ENCODE measurements at regions of chr15 and their contacts with region 1.

Region 1: GRCh38 chr15:94324117-94324826 is 92.9 kb downstream of the MCTP2 start:
- DNase-seq: peak; percentile 61
- H3K4me3 Mint-ChIP-seq: no peak overlapping the region
- H3K27ac Mint-ChIP-seq: no peak overlapping the region
- H3K4me1 Mint-ChIP-seq: no peaks in the 10 kb centered on the region
- H3K27me3 Mint-ChIP-seq: no peaks in the 10 kb centered on the region
- CTCF ChIP-seq: peak; percentile 90

Region 2: GRCh38 chr15:94186770-94187331 is 137.4 kb before region 1 on chr15:
- CTCF ChIA-PET with region 1: interaction called, 17 read pairs
- POLR2A ChIA-PET with region 1: no interaction called
- intact Hi-C with region 1: no loop called
- DNase-seq: no peak
- H3K4me3 Mint-ChIP-seq: no peak overlapping the region
- H3K27ac Mint-ChIP-seq: no peak overlapping the region
- H3K4me1 Mint-ChIP-seq: peaks cover under 1% of the 10 kb centered on the region
- H3K27me3 Mint-ChIP-seq: no peaks in the 10 kb centered on the region
- CTCF ChIP-seq: no peak

Region 3: GRCh38 chr15:94238539-94239118 is 85.6 kb before region 1 on chr15:
- CTCF ChIA-PET with region 1: interaction called, 54 read pairs
- POLR2A ChIA-PET with region 1: interaction called, 56 read pairs
- intact Hi-C with region 1: loop called (anchors 2 kb)
- DNase-seq: no peak
- H3K4me3 Mint-ChIP-seq: peak overlapping the region; percentile 43
- H3K27ac Mint-ChIP-seq: peak overlapping the region; percentile 86
- H3K4me1 Mint-ChIP-seq: peaks cover 46% of the 10 kb centered on the region
- H3K27me3 Mint-ChIP-seq: no peaks in the 10 kb centered on the region
- CTCF ChIP-seq: no peak

Region 4: DNA sequence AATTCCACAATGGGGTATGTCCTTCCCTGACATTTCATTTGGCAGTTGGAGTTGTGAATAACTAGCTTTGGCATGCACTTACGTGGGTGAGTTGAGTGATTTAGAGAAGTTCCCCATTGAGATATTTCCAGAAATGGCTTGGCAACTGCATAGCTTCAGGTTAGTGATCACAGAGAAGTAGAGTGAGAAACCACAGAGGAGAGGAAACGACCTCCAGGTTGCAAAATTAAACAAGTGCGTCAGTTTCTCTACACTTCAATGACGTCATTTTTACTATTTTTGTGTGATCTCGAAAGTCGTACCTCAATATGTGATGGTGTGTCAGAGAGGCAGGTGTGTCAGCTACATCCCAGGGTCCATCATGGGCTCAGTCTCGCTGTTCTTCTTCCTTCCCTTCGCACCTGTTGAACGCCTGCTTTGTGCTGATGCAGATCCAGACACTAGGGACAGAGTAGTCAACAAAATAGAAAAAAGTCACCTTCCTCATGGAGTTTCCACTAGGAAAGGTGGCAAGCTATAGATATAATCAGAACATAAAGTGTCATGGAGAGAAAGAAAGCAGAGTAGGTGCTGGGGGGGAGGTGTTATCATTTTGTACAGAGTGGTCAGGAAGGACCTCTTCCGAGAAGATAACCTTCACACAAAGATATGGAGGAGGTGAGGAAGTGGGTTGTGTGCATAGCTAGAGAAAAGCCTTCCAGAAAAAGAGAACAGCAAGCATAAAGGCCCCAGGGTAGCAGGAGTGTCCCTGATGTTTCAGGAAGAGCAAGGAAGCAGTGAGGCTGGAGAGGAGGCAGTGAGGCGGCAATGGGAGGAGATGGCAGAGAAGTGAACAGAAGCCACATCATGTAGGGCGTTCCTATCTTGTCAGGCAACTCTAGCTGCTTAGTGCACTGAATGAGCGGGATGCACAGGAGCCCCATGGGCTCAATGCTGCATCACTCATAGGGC is 17.3 kb before region 1 on chr15:
- CTCF ChIA-PET with region 1: interaction called, 16 read pairs
- POLR2A ChIA-PET with region 1: no interaction called
- intact Hi-C with region 1: no loop called
- DNase-seq: peak; percentile 75
- H3K4me3 Mint-ChIP-seq: no peak overlapping the region
- H3K27ac Mint-ChIP-seq: peak overlapping the region; percentile 1
- H3K4me1 Mint-ChIP-seq: peaks cover 19% of the 10 kb centered on the region
- H3K27me3 Mint-ChIP-seq: no peaks in the 10 kb centered on the region
- CTCF ChIP-seq: no peak

Region 5: DNA sequence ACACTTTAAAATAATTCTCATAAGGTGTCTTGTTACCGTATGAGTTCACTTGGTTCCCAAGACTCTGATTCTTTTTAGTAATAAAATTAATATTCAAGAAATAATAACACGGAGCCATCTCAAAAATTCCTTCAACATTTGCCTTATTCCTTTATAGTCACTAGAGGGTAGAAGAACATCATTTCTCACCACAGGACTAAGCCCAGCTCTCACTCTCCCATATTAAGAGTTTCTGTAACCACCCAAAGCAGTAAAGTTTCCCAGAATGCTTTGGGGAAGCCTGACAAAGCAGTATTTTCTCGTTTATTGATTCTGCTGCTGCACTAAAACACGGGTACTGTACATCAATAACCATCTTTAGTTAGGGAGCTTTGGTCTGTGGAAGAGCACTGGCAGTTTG is 22.0 kb after region 1 on chr15:
- CTCF ChIA-PET with region 1: interaction called, 11 read pairs
- POLR2A ChIA-PET with region 1: no interaction called
- intact Hi-C with region 1: no loop called
- DNase-seq: no peak
- H3K4me3 Mint-ChIP-seq: no peak overlapping the region
- H3K27ac Mint-ChIP-seq: no peak overlapping the region
- H3K4me1 Mint-ChIP-seq: peaks cover 6% of the 10 kb centered on the region
- H3K27me3 Mint-ChIP-seq: no peaks in the 10 kb centered on the region
- CTCF ChIP-seq: no peak

Region 6: GRCh38 chr15:94709319-94709718 is 385.0 kb after region 1 on chr15:
- CTCF ChIA-PET with region 1: no interaction called
- POLR2A ChIA-PET with region 1: no interaction called
- intact Hi-C with region 1: no loop called
- DNase-seq: no peak
- H3K4me3 Mint-ChIP-seq: no peak overlapping the region
- H3K27ac Mint-ChIP-seq: no peak overlapping the region
- H3K4me1 Mint-ChIP-seq: no peaks in the 10 kb centered on the region
- H3K27me3 Mint-ChIP-seq: no peaks in the 10 kb centered on the region
- CTCF ChIP-seq: no peak